Lower leg skin (tissue), 4 donors: ENCODE measurements at regions of chr11 and their contacts with region 1.

Region 1: DNA sequence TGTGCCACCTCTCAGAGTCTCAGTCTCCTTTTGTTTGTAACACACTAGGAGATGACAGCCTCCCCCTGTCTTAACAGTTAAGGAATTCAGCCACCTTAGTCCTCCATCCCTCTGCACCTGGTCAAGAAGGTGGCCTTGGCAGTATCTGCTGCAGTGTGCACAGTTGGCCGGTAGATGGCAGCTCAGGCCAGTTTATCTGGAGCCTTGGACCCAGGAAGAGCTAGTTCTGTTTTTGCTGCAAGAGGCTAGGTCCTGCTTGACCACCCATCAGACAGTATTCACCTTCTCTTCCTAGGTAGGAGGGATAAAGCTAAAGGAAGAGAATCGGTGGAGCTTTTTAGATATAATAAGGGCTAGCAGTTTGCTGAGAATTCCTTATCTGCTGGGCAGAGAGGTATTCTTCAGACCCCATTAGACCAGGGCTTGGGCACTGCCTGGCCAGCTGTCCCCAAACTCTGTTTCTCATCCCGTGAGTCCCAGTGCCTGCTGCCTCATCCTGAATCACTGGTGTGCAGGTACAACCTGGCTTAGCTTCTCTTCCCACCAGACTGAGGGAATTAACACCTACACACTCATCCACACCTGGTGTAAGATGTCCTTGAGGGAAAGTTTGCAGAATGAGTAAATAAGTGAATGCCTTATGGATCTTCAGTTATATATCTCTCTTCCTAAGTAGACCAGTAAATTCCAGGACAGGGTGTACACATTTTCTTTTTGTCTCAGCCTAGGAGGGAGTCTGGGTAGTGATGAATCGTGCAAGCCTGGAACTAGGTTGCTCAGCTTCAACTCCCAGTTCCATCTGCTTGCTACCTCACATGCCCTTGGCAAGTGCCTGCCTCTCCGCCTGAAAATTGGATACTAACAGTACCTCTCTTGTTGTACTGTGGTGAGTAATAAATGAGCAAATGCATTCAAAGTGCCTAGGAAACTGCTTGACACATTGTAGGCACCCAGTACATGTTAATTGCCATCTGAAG is 70.8 kb upstream of the NARS2 start:
- DNase-seq: peak; percentile 42 to 92
- H3K4me3 ChIP-seq: no peak overlapping the region
- CTCF ChIP-seq: peak in 1 of 3 donors; percentile 14
- POLR2A ChIP-seq: no peak

Region 2: DNA sequence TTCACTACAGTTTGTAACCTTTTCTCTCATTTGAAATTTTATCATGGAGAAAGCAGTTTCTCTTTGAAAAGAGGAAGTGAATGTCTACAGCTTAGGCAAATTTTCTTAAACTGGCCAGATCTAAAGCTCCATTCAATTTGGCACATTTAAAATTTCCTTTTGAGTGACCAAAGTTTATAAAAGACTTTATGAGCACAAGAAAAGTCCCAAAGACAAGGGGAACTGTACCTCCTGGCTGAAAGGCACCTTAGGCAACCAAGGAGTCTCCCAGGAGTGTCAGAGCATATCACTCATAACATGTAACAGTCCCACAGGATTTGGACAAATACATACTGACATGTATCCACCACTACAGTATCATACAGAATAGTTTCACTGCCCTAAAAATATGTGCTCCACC is 112.1 kb before region 1 on chr11:
- intact Hi-C with region 1: no loop called
- DNase-seq: no peak
- H3K4me3 ChIP-seq: no peak overlapping the region
- CTCF ChIP-seq: no peak
- POLR2A ChIP-seq: no peak

Region 3: GRCh38 chr11:78961247-78961646 is 315.7 kb after region 1 on chr11:
- intact Hi-C with region 1: loop called (anchors 5 kb)
- DNase-seq: peak in 1 of 2 donors; percentile 45
- H3K4me3 ChIP-seq: no peak overlapping the region
- CTCF ChIP-seq: no peak
- POLR2A ChIP-seq: no peak

Region 4: GRCh38 chr11:79493555-79494171 is 848.1 kb after region 1 on chr11:
- intact Hi-C with region 1: loop called (anchors 10 kb)
- DNase-seq: peak; percentile 34 to 92
- H3K4me3 ChIP-seq: no peak overlapping the region
- CTCF ChIP-seq: peak in 1 of 3 donors; percentile 66
- POLR2A ChIP-seq: no peak